Endothelial cell of umbilical vein (primary cell): ENCODE measurements at regions of chr1 and their contacts with region 1.

Region 1: DNA sequence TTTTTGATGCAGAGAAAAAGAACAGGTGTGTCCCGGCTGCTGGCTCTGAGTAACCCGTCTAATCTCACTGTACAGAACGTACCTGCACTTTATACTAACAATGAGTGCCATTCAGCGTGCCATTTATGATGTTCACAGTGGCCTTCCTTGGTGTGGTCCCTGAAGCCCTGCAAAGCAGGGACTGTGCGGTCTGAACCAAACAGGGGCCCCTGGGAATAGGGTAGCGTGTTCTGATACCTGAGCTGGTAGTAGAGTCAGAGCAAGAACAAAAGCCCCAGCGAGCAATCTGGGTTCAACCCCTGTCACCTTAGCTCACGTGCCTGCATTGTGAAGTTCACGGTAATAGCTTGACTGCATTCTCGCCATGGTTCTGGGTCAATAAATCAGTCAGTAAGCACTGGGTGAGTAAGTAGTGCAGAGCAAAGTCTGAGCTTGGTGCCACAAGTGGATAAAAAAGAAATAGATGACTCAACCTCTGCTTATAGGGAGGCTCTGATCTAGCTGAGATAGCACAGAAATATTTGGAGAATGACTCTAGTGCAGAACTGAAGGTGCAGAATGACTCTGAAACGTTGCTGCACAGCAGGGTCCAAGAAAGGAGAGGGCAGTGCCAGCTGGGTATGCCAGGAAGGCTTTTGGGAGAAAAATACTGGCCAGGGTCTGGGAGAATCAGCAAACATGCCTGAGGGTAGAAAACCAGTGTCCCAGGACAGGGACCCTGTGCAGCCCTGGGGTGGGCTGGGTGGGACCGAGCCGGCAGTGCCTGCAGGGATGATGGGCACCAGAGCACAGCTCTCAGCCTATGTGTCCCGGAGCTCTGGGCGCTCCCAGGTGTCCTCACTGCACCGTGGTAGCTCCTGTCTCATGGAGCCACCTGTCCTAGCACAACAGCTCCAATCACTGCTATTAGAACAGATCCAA is 125.9 kb downstream of the RHOU start:
- DNase-seq: no peak
- H3K4me3 ChIP-seq: no peak overlapping the region
- H3K27ac ChIP-seq: no peak overlapping the region
- H3K4me1 ChIP-seq: no peaks in the 10 kb centered on the region
- H3K27me3 ChIP-seq: no peaks in the 10 kb centered on the region
- CTCF ChIP-seq: no peak
- POLR2A ChIP-seq: no peak

Region 2: GRCh38 chr1:228308628-228309363 is 552.4 kb before region 1 on chr1:
- CTCF ChIA-PET with region 1: no interaction called
- POLR2A ChIA-PET with region 1: no interaction called
- dilution Hi-C with region 1: no loop called
- intact Hi-C with region 1: no loop called
- DNase-seq: no peak
- H3K4me3 ChIP-seq: no peak overlapping the region
- H3K27ac ChIP-seq: no peak overlapping the region
- H3K4me1 ChIP-seq: no peaks in the 10 kb centered on the region
- H3K27me3 ChIP-seq: no peaks in the 10 kb centered on the region
- CTCF ChIP-seq: peak in 1 of 2 donors; percentile 3
- POLR2A ChIP-seq: no peak

Region 3: DNA sequence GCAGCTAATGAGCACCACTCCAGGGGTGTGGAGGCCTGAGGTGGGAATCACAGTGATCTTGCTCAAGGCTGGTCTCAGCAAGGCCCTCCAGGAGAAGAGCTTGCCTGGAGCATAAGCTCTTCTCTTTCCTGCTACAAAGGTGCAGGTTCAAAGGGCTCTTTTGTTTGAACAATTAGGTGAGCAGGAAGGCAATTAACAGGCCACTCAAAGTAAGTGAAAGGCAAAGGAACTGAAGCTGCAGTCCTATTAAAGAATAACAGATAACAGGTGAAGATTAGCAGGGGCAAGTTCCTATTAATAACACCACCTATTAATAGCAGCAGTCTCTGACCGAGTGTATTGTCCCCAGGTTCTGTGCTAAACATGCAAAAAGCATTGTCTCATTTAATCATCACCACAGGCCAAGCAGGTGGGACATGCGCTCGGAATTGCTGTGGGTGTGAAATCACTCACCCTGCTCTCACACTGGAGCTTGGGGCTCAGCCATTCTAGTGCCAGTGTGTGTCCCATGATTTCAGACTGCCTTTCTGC is 12.1 kb before region 1 on chr1:
- CTCF ChIA-PET with region 1: interaction called, 10 read pairs
- POLR2A ChIA-PET with region 1: no interaction called
- dilution Hi-C with region 1: no loop called
- intact Hi-C with region 1: no loop called
- DNase-seq: no peak
- H3K4me3 ChIP-seq: no peak overlapping the region
- H3K27ac ChIP-seq: no peak overlapping the region
- H3K4me1 ChIP-seq: no peaks in the 10 kb centered on the region
- H3K27me3 ChIP-seq: no peaks in the 10 kb centered on the region
- CTCF ChIP-seq: no peak
- POLR2A ChIP-seq: no peak

Region 4: DNA sequence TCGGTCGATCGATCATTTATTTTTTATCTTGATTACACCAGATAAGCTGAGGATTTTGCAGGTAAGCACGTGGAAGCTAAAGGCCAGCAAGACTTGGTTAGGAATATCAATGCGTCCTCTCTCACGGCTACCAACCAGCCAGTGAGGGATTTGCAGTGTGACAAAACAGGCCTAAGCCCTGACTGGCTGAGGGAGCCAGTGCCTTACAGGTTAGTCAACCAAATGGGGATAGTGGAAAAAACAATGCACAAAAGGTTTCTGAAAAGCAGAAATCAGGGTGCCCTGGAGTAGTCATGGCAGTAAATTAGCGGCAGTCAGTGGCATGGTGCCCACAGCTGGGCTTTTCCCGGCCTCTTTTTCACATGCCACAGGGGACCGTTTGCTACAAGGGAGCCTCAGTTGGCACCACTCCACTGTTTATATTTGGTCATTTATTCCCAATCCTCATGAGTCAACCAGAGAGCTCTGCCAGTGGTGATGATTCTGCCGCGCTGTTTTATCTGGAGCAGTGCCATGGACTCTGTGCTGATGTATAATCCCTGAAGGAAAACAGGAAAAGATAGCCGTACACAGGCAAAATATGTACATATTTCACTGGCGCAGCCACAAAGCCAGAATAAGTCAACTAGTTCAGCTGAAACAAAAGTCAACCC is 41.7 kb after region 1 on chr1:
- CTCF ChIA-PET with region 1: no interaction called
- POLR2A ChIA-PET with region 1: no interaction called
- dilution Hi-C with region 1: no loop called
- intact Hi-C with region 1: no loop called
- DNase-seq: peak; percentile 99
- H3K4me3 ChIP-seq: no peak overlapping the region
- H3K27ac ChIP-seq: no peak overlapping the region
- H3K4me1 ChIP-seq: peaks cover 12% of the 10 kb centered on the region
- H3K27me3 ChIP-seq: peaks cover 0 to 2% of the 10 kb centered on the region in 2 experiments
- CTCF ChIP-seq: no peak
- POLR2A ChIP-seq: no peak

Region 5: GRCh38 chr1:229117664-229118300 is 256.6 kb after region 1 on chr1:
- CTCF ChIA-PET with region 1: no interaction called
- POLR2A ChIA-PET with region 1: no interaction called
- dilution Hi-C with region 1: no loop called
- intact Hi-C with region 1: no loop called
- DNase-seq: no peak
- H3K4me3 ChIP-seq: no peak overlapping the region
- H3K27ac ChIP-seq: no peak overlapping the region
- H3K4me1 ChIP-seq: no peaks in the 10 kb centered on the region
- H3K27me3 ChIP-seq: no peaks in the 10 kb centered on the region
- CTCF ChIP-seq: no peak
- POLR2A ChIP-seq: no peak